ENCODE measurements at regions of chr19 and their contacts with region 1.

Region 1: DNA sequence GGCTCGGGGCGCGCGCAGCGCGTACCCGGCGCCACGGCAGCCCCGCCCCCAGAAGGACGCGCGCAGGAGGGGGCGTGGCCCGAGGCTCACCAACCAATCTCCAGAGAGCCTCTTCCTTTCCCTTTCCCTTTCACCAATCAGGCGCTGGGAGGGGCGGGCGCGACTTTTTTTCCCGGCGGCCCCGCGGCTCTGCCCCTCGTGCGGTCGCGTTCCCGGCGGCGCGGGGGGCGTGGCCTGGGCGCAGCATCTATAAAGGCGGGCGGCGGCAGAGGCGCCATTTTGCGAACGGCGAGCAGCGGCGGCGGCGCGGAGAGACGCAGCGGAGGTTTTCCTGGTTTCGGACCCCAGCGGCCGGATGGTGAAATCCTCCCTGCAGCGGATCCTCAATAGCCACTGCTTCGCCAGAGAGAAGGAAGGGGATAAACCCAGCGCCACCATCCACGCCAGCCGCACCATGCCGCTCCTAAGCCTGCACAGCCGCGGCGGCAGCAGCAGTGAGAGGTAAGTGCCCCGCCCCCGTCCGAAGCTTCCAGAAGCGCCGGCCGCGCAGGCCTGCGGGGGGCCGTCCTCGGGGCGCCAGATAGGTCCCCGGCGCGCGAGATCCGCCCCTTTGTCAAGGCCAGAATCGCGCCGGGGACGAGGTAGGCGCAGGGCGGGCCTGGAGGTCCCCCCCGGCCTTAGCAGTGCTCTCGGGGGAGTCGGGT is 12.6 kb downstream of the PEAK3 start:
- DNase-seq: peak; percentile 88
- H3K4me3 ChIP-seq: peak overlapping the region; percentile 99
- CTCF ChIP-seq: no peak

Region 2: DNA sequence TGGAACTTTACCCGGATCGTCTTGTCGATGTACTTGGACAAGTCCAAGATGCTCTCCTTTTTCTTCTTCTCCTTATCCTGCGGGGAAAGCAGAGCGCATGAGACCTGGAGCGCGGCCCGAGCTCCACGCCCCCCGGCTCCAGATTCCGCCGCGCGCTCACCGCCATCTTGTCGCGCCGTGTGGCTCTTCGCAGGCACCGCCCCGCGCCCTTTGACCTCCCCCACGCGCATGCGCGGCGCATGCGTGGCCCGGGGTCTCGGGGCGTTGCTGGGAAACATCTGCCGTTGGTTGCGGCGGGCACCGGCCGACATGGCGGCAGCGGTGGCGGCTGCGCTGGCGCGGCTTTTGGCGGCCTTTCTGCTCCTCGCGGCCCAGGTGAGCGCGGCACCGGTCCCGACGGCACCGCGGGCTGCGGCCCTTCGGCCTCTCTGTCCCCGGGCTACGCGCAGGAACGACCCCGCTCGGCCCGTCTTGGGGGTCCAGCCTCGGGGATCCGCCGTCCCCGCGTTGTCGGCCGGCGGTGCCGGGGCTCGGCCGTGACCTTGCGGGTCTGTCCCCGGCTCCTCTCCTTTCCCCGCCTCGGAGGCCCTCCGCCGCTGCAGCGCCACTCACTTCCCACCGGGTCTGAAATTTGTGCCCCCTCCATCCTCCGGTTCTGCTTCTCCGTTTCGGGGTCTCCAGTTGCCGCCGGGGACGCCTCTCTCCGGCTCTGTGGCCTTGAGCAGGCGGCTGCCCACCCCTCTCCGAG is 59.2 kb after region 1 on chr19 and contains the starts of genes LSM7 and SPPL2B:
- in situ Hi-C with region 1: loop called (anchors 10 kb)
- DNase-seq: peak; percentile 49
- H3K4me3 ChIP-seq: peak within 1 kb of the TSS; percentile 91
- CTCF ChIP-seq: no peak